ENCODE measurements at regions of chr14 and their contacts with region 1.

Region 1: GRCh38 chr14:23562268-23563203 is 5.1 kb downstream of the AP1G2 start:
- DNase-seq: peak; percentile 55 to 68
- ATAC-seq: peak in 1 of 2 experiments; percentile 31; a peak in 3 of 6 replicates
- H3K4me3 ChIP-seq: no peak overlapping the region
- H3K27ac ChIP-seq: no peak overlapping the region
- H3K4me1 ChIP-seq: peaks cover 10% of the 10 kb centered on the region; the same call in 1 of the 3 replicates
- CTCF ChIP-seq: peak; percentile 69
- EP300 ChIP-seq: no peak
- POLR2A ChIP-seq: no peak; the same call in 1 of the 2 replicates
- RAD21 ChIP-seq: peak; percentile 64 to 66

Region 2: GRCh38 chr14:23469127-23469905 is 93.2 kb before region 1 on chr14 and contains the start of gene NGDN:
- CTCF ChIA-PET with region 1: interaction called, 553 read pairs
- POLR2A ChIA-PET with region 1: interaction called, 14 read pairs
- DNase-seq: peak; percentile 98 to 100
- ATAC-seq: peak; percentile 96 to 97
- H3K4me3 ChIP-seq: peak within 1 kb of the TSS; percentile 87
- H3K27ac ChIP-seq: peak within 1 kb of the TSS; percentile 77 to 87
- H3K4me1 ChIP-seq: peaks cover 10% of the 10 kb centered on the region; the same call in 2 of the 3 replicates
- CTCF ChIP-seq: peak; percentile 59
- EP300 ChIP-seq: no peak
- POLR2A ChIP-seq: peak; percentile 77
- RAD21 ChIP-seq: peak; percentile 30 to 39; a peak in 3 of 5 replicates
- polyA plus RNA-seq, gene NGDN: 99.5 and 108 TPM in 2 replicates

Region 3: GRCh38 chr14:23544511-23545447 is 17.8 kb before region 1 on chr14:
- CTCF ChIA-PET with region 1: interaction called, 48 read pairs
- POLR2A ChIA-PET with region 1: no interaction called
- DNase-seq: no peak
- ATAC-seq: no peak
- H3K4me3 ChIP-seq: no peak overlapping the region
- H3K27ac ChIP-seq: no peak overlapping the region
- H3K4me1 ChIP-seq: no peaks in the 10 kb centered on the region
- CTCF ChIP-seq: no peak
- EP300 ChIP-seq: no peak
- POLR2A ChIP-seq: no peak
- RAD21 ChIP-seq: no peak

Region 4: DNA sequence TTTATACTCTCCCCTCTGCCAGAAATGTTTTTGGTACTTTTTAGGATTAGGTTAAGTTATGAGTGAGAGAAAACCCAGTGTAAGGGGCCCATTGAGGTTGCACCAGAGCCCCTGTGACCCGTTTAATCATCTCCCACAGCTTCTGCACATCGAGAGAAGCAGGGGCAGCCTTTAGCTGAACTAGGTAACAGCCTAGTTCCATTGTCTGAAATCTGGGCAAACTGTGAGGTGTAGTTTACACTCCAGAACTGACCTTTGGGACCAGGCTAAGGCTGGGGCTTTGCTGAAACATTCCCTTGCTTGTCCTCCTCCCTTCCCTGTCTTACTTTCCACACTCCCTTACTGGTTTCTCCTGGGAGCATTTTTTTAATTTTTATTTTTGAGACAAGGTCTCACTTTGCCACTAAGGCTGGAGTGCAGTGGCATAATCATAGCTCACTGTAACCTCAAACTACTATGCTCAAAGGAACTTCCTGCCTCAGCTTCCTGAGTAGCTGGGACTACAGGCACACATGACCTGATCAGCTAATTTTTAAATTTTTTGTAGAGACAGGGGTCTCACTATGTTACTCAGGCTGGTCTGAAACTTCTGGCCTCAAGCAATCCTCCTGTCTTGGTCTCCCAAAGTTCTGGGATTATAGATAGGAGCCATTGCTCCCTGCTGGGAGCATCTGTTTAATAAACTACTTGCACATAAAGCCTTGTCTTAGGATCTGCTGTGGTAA is 47.7 kb after region 1 on chr14:
- CTCF ChIA-PET with region 1: no interaction called
- POLR2A ChIA-PET with region 1: no interaction called
- DNase-seq: no peak
- ATAC-seq: no peak
- H3K4me3 ChIP-seq: no peak overlapping the region
- H3K27ac ChIP-seq: no peak overlapping the region
- H3K4me1 ChIP-seq: peaks cover 11% of the 10 kb centered on the region; the same call in 2 of the 3 replicates
- CTCF ChIP-seq: no peak
- EP300 ChIP-seq: no peak
- POLR2A ChIP-seq: no peak
- RAD21 ChIP-seq: no peak

Measured in A549 (cell line).